Naive thymus-derived CD4-positive, alpha-beta T cell (primary cell): ENCODE measurements at regions of chr4 and their contacts with region 1.

Region 1: DNA sequence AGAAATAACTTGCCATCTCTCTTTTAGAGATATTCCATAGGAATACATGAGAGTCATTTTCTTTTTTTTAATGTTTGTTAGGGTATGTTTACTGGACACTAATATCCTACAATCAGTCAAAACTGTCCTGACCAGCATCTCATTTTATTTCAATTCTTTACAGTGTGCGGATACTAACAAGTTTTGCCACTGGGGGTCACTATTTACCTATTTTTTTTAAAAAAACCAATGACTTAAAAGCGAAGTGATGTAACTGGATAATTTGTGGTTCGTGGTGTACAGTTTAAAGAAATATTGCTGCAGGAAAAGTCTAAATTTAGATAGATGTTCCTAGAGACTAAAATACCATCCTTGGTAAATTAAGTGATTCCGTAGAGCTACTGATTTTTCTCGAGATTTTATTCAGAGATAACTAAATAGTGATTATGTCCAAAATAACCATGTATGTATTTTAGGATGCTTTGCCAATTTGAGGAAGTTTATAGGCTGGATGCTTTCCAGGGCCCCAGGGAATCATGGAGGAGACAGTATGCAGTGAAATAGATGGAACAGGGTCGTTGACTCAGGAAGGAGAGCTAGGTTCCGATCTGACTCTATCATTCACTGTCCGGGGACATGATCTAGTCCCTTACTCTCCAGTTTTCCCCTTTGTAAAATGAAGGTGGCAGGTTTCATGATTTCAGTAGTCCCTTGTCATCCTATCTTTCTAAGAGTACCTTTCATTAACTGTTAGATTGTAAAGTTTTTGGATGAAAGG is 34.0 kb upstream of the GNPDA2 start:
- DNase-seq: peak in 5 of 9 donors; percentile 8 to 35 (median 22)
- ATAC-seq: peak; percentile 57
- H3K4me3 ChIP-seq: no peak overlapping the region
- H3K4me3 Mint-ChIP-seq: no peak overlapping the region
- H3K27ac ChIP-seq: no peak overlapping the region
- H3K27ac Mint-ChIP-seq: no peak overlapping the region
- H3K4me1 ChIP-seq: no peaks in the 10 kb centered on the region
- H3K4me1 Mint-ChIP-seq: peaks cover 0 to 3% (median 0%) of the 10 kb centered on the region in 7 donors
- H3K27me3 ChIP-seq: no peaks in the 10 kb centered on the region
- H3K27me3 Mint-ChIP-seq: peaks cover 9 to 48% (median 37%) of the 10 kb centered on the region in 5 donors

Region 2: GRCh38 chr4:44791831-44792230 is 31.5 kb after region 1 on chr4:
- CTCF ChIA-PET with region 1: no interaction called
- POLR2A ChIA-PET with region 1: no interaction called
- intact Hi-C with region 1: no loop called
- DNase-seq: no peak
- ATAC-seq: no peak
- H3K4me3 ChIP-seq: no peak overlapping the region
- H3K4me3 Mint-ChIP-seq: no peak overlapping the region
- H3K27ac ChIP-seq: no peak overlapping the region
- H3K27ac Mint-ChIP-seq: no peak overlapping the region
- H3K4me1 ChIP-seq: no peaks in the 10 kb centered on the region
- H3K4me1 Mint-ChIP-seq: no peaks in the 10 kb centered on the region
- H3K27me3 ChIP-seq: no peaks in the 10 kb centered on the region
- H3K27me3 Mint-ChIP-seq: peaks cover 0 to 13% (median 0%) of the 10 kb centered on the region in 5 donors

Region 3: DNA sequence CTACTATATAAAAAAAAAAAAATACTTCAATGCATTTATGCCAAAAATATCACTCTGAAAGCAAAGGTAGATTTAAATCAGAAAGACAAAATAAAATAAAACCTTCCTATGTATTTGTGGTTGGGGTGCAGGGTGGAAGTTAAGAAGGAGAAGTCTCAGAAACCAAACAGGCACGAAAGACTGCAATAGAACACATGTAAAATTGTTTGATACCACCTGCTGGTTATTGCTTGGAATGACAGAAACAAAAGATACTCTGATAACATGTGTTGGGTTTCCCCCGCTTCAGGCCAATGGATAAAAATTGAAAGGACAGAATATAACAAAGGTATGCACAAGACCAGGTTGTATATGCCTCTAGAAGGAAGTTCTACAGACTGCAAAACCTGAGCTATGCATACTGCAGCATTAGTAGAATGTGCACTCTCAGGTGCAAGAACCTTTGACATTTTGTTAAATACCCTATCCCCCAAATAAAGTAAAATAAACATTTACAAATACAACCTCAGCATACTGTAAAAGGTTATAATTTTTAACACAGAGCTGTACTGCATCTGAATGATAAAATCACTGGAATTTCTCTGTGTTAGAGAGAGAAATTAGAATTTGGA is 1510.8 kb after region 1 on chr4:
- CTCF ChIA-PET with region 1: no interaction called
- POLR2A ChIA-PET with region 1: no interaction called
- intact Hi-C with region 1: loop called in 1 of 2 experiments (anchors 2 kb)
- DNase-seq: no peak
- ATAC-seq: no peak
- H3K4me3 ChIP-seq: no peak overlapping the region
- H3K4me3 Mint-ChIP-seq: no peak overlapping the region
- H3K27ac ChIP-seq: no peak overlapping the region
- H3K27ac Mint-ChIP-seq: no peak overlapping the region
- H3K4me1 ChIP-seq: no peaks in the 10 kb centered on the region
- H3K4me1 Mint-ChIP-seq: no peaks in the 10 kb centered on the region
- H3K27me3 ChIP-seq: no peaks in the 10 kb centered on the region
- H3K27me3 Mint-ChIP-seq: no peaks in the 10 kb centered on the region